GM12878 (cell line): ENCODE measurements at regions of chr3 and their contacts with region 1.

Region 1: GRCh38 chr3:177448987-177449975 is 252.0 kb upstream of the TBL1XR1 start:
- DNase-seq: peak; percentile 36
- ATAC-seq: peak; percentile 95
- H3K4me3 ChIP-seq: peak overlapping the region; percentile 9; the same call in 1 of the 2 replicates
- H3K27ac ChIP-seq: no peak overlapping the region
- H3K4me1 ChIP-seq: peaks cover 19% of the 10 kb centered on the region
- H3K27me3 ChIP-seq: no peaks in the 10 kb centered on the region
- CTCF ChIP-seq: no peak
- EP300 ChIP-seq: no peak
- POLR2A ChIP-seq: no peak
- RAD21 ChIP-seq: peak; percentile 14; the same call in 1 of the 2 replicates

Region 2: GRCh38 chr3:176987901-176988650 is 461.2 kb before region 1 on chr3:
- CTCF ChIA-PET with region 1: no interaction called
- POLR2A ChIA-PET with region 1: no interaction called
- RAD21 ChIA-PET with region 1: no interaction called
- SMC1A ChIA-PET with region 1: no interaction called
- in situ Hi-C with region 1: no loop called
- intact Hi-C with region 1: no loop called
- DNase-seq: no peak
- ATAC-seq: no peak
- H3K4me3 ChIP-seq: no peak overlapping the region
- H3K27ac ChIP-seq: no peak overlapping the region
- H3K4me1 ChIP-seq: no peaks in the 10 kb centered on the region
- H3K27me3 ChIP-seq: no peaks in the 10 kb centered on the region; a peak in 1 of 4 replicates
- CTCF ChIP-seq: no peak
- EP300 ChIP-seq: no peak
- POLR2A ChIP-seq: no peak
- RAD21 ChIP-seq: no peak

Region 3: GRCh38 chr3:177378168-177378567 is 71.1 kb before region 1 on chr3:
- CTCF ChIA-PET with region 1: no interaction called
- POLR2A ChIA-PET with region 1: no interaction called
- RAD21 ChIA-PET with region 1: no interaction called
- SMC1A ChIA-PET with region 1: no interaction called
- in situ Hi-C with region 1: no loop called
- intact Hi-C with region 1: loop called (anchors 5 kb)
- DNase-seq: peak; percentile 71
- ATAC-seq: peak; percentile 90
- H3K4me3 ChIP-seq: no peak overlapping the region
- H3K27ac ChIP-seq: peak overlapping the region; percentile 74
- H3K4me1 ChIP-seq: peaks cover 18% of the 10 kb centered on the region
- H3K27me3 ChIP-seq: no peaks in the 10 kb centered on the region
- CTCF ChIP-seq: no peak
- EP300 ChIP-seq: peak in 1 of 2 experiments; percentile 52; a peak in 1 of 4 replicates
- POLR2A ChIP-seq: no peak
- RAD21 ChIP-seq: no peak

Region 4: GRCh38 chr3:177589911-177590381 is 140.7 kb after region 1 on chr3:
- CTCF ChIA-PET with region 1: no interaction called
- POLR2A ChIA-PET with region 1: no interaction called
- RAD21 ChIA-PET with region 1: no interaction called
- SMC1A ChIA-PET with region 1: no interaction called
- in situ Hi-C with region 1: no loop called
- intact Hi-C with region 1: loop called (anchors 5 kb)
- DNase-seq: no peak
- ATAC-seq: peak; percentile 83
- H3K4me3 ChIP-seq: no peak overlapping the region
- H3K27ac ChIP-seq: no peak overlapping the region
- H3K4me1 ChIP-seq: peaks cover 19% of the 10 kb centered on the region; the same call in 1 of the 2 replicates
- H3K27me3 ChIP-seq: no peaks in the 10 kb centered on the region
- CTCF ChIP-seq: no peak
- EP300 ChIP-seq: no peak
- POLR2A ChIP-seq: no peak
- RAD21 ChIP-seq: no peak

Region 5: DNA sequence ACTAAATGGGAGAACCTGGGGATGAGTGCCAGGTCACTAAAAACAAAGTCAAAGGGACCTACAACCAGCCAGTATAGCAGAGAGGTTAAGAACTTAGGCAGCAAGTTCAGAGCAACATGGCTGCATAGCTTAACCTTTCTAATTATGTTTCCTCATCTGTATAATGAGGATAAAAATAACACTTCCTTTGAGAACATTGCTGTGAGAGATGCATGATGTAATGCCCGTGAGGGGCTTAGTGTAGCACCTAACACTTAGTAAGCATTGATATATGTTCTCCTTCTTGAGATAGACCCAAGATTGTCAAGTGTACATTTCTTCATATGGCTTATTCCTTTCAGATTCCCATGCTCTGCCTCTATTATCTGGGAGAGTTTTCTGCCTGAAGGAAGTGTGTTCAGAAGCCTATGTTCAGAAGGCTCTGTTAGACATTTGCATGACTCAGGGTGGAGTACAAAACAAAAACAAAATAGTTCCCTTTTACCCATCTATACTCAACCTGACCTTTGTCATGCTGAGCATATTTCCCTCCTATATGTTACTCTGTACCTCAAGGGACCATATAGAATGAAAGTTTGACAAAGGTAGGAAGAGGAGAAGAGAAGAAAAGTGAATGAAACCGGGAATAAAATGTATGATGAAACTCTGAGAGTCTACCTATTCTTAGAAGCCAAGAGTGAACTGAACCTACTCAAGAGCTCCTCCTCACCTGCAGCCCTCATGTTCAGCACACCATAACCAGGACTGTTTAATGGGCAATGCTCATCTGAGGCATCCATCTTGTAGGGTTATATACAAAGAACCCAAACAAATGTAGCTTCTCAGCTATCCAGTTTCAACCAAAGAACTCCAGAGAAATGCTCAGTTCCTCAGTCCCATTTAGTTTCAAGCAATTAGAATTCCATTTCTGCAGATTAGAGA is 1016.2 kb after region 1 on chr3:
- CTCF ChIA-PET with region 1: no interaction called
- POLR2A ChIA-PET with region 1: no interaction called
- RAD21 ChIA-PET with region 1: no interaction called
- SMC1A ChIA-PET with region 1: no interaction called
- in situ Hi-C with region 1: no loop called
- intact Hi-C with region 1: no loop called
- DNase-seq: no peak
- ATAC-seq: peak; percentile 69
- H3K4me3 ChIP-seq: no peak overlapping the region
- H3K27ac ChIP-seq: peak overlapping the region; percentile 42
- H3K4me1 ChIP-seq: peaks cover 14% of the 10 kb centered on the region
- H3K27me3 ChIP-seq: no peaks in the 10 kb centered on the region
- CTCF ChIP-seq: no peak
- EP300 ChIP-seq: no peak
- POLR2A ChIP-seq: no peak
- RAD21 ChIP-seq: no peak